ENCODE measurements at regions of chr11 and their contacts with region 1.

Region 1: GRCh38 chr11:13343931-13344717 is 66.5 kb downstream of the BMAL1 start:
- DNase-seq: no peak
- H3K4me3 ChIP-seq: no peak overlapping the region
- H3K27ac ChIP-seq: no peak overlapping the region
- H3K4me1 ChIP-seq: peaks cover 15% of the 10 kb centered on the region
- H3K27me3 ChIP-seq: no peaks in the 10 kb centered on the region
- CTCF ChIP-seq: peak; percentile 74 to 84 (median 78)
- POLR2A ChIP-seq: no peak

Region 2: DNA sequence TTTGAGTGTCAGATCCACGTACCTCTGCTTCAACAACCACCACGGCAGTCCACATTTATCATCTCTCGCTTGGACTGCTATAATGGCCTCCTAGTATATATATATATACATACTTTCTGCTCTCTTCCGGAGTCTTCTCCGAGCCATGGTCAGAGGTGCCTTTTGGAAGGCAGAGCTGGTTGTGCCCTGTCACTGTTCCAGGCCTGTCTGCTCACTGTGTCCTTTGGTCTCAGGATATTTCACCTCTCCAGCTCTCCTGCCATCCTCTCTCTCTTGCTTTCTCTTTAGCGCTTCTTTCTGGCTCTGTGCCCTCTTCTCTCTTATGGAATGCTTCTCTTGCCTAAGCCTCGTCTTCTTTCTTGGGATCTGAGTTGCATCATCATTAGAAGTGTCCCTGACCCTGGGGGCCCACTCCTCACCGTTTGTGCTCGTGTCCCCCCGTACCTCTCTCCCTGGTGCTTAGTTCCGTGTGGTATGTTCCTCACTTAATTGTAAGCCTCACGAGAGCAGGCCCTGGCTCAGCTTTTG is 421.1 kb before region 1 on chr11:
- intact Hi-C with region 1: no loop called
- DNase-seq: no peak
- H3K4me3 ChIP-seq: no peak overlapping the region
- H3K27ac ChIP-seq: no peak overlapping the region
- H3K4me1 ChIP-seq: no peaks in the 10 kb centered on the region
- H3K27me3 ChIP-seq: no peaks in the 10 kb centered on the region
- CTCF ChIP-seq: no peak
- POLR2A ChIP-seq: no peak

Region 3: DNA sequence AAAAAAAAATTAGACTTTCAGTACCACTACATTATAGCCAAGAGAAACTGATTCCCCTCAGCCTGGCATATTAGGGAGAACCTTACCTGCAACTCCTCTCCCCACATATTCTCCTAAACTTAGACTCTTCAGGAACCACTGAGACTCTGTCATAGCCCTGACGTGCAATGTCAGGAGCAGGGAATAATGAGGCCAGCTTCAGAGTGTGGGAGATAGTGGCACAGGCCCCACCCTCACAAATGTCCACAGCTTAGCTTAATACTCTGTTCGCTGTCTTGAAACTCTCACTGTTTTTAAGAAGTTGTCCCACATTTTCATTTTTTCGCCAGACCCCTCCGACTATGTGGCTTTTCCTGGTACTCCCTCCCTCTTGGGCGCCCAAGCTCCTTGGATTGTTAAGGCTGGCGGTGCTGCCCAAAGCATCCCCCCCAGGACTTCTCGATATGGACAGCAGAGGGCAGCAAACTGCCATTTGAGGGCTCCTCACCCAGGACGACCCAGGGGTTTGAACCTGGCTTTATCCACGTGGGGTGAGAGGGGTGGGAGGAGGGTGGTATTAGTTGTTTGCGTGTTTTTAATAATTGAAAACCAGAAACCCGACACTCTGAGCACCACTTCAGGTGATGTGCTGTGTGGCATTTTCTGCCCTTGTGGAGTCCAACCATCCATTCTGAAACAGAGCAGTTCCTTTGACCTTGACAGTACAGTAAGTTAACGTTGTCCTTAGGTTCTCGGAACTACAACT is 380.2 kb before region 1 on chr11:
- intact Hi-C with region 1: loop called (anchors 10 kb)
- DNase-seq: no peak
- H3K4me3 ChIP-seq: no peak overlapping the region
- H3K27ac ChIP-seq: no peak overlapping the region
- H3K4me1 ChIP-seq: no peaks in the 10 kb centered on the region
- H3K27me3 ChIP-seq: no peaks in the 10 kb centered on the region
- CTCF ChIP-seq: peak; percentile 62 to 90 (median 76)
- POLR2A ChIP-seq: no peak

Region 4: DNA sequence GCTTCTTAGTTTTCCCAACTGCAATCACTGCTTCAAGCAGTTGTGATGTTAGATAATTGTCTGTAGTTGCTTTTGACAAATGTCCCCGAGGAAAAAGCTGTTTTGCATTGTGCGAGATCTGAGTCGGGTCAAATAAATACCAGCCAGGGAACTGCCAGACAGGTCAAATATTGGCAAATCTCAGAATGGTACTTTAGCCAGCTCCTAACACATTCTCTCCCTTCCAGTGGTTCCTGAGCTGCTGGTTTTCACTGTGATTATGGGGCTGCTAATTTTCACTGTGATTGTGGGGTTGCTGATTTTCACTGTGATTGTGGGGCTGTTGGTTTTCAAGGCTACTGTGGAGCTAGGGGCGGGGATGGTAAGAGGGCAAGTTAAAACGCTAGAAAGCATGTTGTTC is 320.7 kb before region 1 on chr11:
- intact Hi-C with region 1: no loop called
- DNase-seq: no peak
- H3K4me3 ChIP-seq: no peak overlapping the region
- H3K27ac ChIP-seq: no peak overlapping the region
- H3K4me1 ChIP-seq: no peaks in the 10 kb centered on the region
- H3K27me3 ChIP-seq: no peaks in the 10 kb centered on the region
- CTCF ChIP-seq: no peak
- POLR2A ChIP-seq: no peak

Region 5: GRCh38 chr11:13207665-13208594 is 136.2 kb before region 1 on chr11:
- intact Hi-C with region 1: loop called (anchors 5 kb)
- DNase-seq: no peak
- H3K4me3 ChIP-seq: peak overlapping the region; percentile 28 to 37
- H3K27ac ChIP-seq: peak overlapping the region; percentile 14
- H3K4me1 ChIP-seq: peaks cover 22% of the 10 kb centered on the region
- H3K27me3 ChIP-seq: no peaks in the 10 kb centered on the region
- CTCF ChIP-seq: peak in 1 of 3 experiments; percentile 4
- POLR2A ChIP-seq: no peak

Measured in vagina (tissue), 2 donors.